Activated CD4-positive, alpha-beta memory T cell treated with anti-CD3 and anti-CD28 coated beads, Interleukin-2, amount 10 ng/mL, durations not matched to agents 7 days and 5 days (primary cell): ENCODE measurements at regions of chr14 and their contacts with region 1.

Region 1: GRCh38 chr14:22531451-22532344 is 57.3 kb downstream of the DAD1 start:
- DNase-seq: no peak
- H3K4me3 Mint-ChIP-seq: peak overlapping the region; percentile 82
- H3K27ac Mint-ChIP-seq: peak overlapping the region; percentile 96
- H3K4me1 Mint-ChIP-seq: peaks cover 90% of the 10 kb centered on the region
- H3K27me3 Mint-ChIP-seq: no peaks in the 10 kb centered on the region

Region 2: DNA sequence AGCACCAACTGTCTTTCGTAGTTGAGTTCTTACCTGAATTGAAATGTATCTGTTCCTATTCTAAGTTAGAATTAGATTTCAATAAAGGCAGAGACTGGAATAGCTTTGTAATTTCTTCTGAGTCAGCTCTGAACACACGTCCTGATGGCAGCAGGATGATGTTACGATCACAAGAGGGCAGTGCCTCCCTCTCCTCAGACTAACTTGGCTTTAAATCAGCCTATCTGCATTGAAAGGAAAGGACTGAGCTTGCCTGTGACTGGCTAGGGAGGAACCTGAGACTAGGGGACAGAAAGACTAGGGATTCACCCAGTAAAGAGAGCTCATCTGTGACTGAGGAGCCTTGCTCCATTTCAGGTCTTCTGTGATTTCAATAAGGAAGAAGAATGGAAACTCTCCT is 534.4 kb before region 1 on chr14:
- CTCF ChIA-PET with region 1: interaction called, 3 read pairs
- POLR2A ChIA-PET with region 1: interaction called, 21 read pairs
- DNase-seq: peak; percentile 57
- H3K4me3 Mint-ChIP-seq: peak overlapping the region; percentile 82
- H3K27ac Mint-ChIP-seq: peak overlapping the region; percentile 85
- H3K4me1 Mint-ChIP-seq: peaks cover 27% of the 10 kb centered on the region
- H3K27me3 Mint-ChIP-seq: peaks cover 2% of the 10 kb centered on the region

Region 3: DNA sequence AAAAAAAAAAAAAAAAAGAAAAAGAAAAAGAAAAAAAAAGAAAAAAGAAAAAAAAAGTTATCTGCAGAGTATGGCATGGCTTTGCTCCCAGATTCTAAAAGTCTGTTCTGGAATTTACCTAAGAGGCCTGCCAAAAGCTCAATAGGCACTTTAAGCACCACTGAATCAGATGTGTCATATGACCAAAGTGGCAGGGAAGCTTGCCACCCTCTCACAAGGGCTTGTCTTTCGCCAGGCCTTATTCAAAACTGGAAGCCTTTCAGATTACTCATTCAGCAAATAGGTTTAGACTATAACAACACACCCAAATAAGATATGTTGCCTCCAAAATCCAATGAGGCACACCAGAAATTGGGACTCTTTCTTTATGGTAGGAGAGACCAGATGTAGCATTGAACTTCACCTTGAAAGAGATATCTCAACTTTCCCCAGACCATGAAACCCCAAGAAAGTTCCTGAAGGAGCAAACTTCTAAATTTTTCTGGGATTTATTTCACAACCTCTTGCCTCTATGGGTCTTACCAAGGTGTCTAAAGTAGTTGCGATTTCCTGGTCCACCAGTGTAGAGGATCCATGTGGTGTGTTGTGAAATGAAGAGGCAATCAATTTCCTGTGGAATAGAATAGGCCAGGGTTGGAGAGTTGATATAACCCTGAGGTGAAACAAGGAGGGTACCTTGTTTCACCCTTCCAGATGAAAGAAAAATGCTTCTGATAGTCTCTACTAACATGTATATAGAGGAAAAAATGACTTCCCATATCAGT is 161.4 kb before region 1 on chr14:
- CTCF ChIA-PET with region 1: no interaction called
- POLR2A ChIA-PET with region 1: no interaction called
- DNase-seq: no peak
- H3K4me3 Mint-ChIP-seq: no peak overlapping the region
- H3K27ac Mint-ChIP-seq: no peak overlapping the region
- H3K4me1 Mint-ChIP-seq: no peaks in the 10 kb centered on the region
- H3K27me3 Mint-ChIP-seq: no peaks in the 10 kb centered on the region

Region 4: GRCh38 chr14:22519877-22520685 is 11.6 kb before region 1 on chr14:
- CTCF ChIA-PET with region 1: interaction called, 8 read pairs
- POLR2A ChIA-PET with region 1: interaction called, 707 read pairs
- DNase-seq: no peak
- H3K4me3 Mint-ChIP-seq: peak overlapping the region; percentile 78
- H3K27ac Mint-ChIP-seq: peak overlapping the region; percentile 91
- H3K4me1 Mint-ChIP-seq: peaks cover 96% of the 10 kb centered on the region
- H3K27me3 Mint-ChIP-seq: no peaks in the 10 kb centered on the region

Region 5: GRCh38 chr14:22549981-22550673 is 18.4 kb after region 1 on chr14:
- CTCF ChIA-PET with region 1: interaction called, 55 read pairs
- POLR2A ChIA-PET with region 1: interaction called, 630 read pairs
- DNase-seq: peak; percentile 79
- H3K4me3 Mint-ChIP-seq: peak overlapping the region; percentile 69
- H3K27ac Mint-ChIP-seq: peak overlapping the region; percentile 97
- H3K4me1 Mint-ChIP-seq: peaks cover 93% of the 10 kb centered on the region
- H3K27me3 Mint-ChIP-seq: no peaks in the 10 kb centered on the region